Activated CD4-positive, alpha-beta T cell treated with anti-CD3 and anti-CD28 coated beads for 36 hours (primary cell): ENCODE measurements at regions of chr9 and their contacts with region 1.

Region 1: GRCh38 chr9:75185585-75186170 is 97.4 kb downstream of the OSTF1 start:
- DNase-seq: peak; percentile 79
- ATAC-seq: peak; percentile 72
- H3K4me3 Mint-ChIP-seq: no peak overlapping the region
- H3K27ac Mint-ChIP-seq: no peak overlapping the region
- H3K4me1 Mint-ChIP-seq: peaks cover 19% of the 10 kb centered on the region
- H3K27me3 Mint-ChIP-seq: no peaks in the 10 kb centered on the region

Region 2: DNA sequence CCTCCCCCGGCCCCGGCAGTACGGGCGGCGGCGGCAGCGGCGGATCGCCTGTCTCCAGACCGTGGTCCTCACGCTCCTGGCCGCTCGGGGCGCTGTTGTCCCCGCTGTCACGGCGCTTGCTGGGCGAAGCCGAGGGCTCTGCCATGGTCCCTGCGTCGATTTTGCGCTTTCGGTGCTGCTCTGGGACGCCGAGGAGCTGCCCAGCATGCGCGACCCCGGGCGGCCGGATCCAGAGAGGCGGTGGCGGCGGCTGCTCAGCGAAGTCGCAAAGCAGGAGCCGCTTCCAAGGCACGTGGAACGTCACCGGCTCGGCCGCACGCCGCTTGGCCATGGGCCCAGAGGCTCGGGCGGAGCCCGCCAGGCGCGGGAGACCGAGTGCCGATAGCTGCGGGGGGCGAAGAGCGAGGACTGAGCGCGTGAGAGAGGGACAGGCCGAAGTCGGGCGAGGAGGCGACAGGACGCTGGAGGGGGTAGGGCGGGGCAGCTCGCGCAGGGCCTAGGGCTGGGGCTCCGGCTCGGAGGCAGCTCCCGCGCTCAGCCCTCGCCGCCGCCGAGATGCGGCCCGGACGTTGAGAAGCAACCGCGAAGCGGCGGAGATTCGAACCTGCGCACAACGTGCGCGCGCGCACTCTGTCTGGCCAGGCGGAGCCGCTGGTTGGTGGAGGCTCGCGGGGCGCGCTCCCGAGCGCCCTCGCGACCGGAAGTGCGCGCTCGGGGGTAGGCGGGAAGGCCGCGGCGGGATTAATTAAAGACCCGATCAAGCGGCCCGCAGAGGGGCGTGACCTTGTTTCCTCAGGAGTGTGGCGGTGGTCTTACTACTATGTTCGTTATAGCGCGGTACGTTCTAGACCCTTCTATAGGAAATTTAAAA is 233.2 kb before region 1 on chr9 and contains the start of gene C9orf40:
- CTCF ChIA-PET with region 1: interaction called, 4 read pairs
- POLR2A ChIA-PET with region 1: no interaction called
- intact Hi-C with region 1: loop called in 1 of 2 experiments (anchors 5 kb)
- DNase-seq: peak; percentile 95
- ATAC-seq: peak; percentile 93
- H3K4me3 Mint-ChIP-seq: peak within 1 kb of the TSS; percentile 93
- H3K27ac Mint-ChIP-seq: peak within 1 kb of the TSS; percentile 96
- H3K4me1 Mint-ChIP-seq: peaks cover 28% of the 10 kb centered on the region
- H3K27me3 Mint-ChIP-seq: no peaks in the 10 kb centered on the region
- total RNA-seq, gene C9orf40: 14.0 to 19.7 TPM

Region 3: DNA sequence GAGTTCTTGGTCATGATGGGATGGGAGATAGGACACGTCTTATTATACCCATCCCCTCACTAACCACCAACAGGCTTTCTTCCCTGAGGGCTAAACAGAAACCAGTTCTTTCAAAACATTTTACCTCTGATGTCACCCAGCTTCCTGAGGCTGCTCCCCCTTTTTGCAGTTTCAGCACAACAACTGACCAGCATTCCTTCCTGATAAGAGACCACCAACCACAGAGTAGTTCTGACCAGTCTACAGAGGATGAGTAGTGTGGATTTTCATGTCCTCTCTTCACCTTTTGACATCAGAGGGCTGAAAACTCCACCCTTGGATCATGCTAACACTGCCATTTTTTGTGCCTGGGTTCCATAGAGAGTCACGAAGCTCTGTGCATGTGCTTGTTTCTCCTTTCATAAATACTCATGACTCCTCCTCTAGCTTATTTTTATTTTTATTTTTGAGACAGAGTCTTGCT is 14.7 kb before region 1 on chr9:
- CTCF ChIA-PET with region 1: interaction called, 21 read pairs
- POLR2A ChIA-PET with region 1: interaction called, 3 read pairs
- intact Hi-C with region 1: no loop called
- DNase-seq: no peak
- ATAC-seq: no peak
- H3K4me3 Mint-ChIP-seq: no peak overlapping the region
- H3K27ac Mint-ChIP-seq: no peak overlapping the region
- H3K4me1 Mint-ChIP-seq: peaks cover 10% of the 10 kb centered on the region
- H3K27me3 Mint-ChIP-seq: no peaks in the 10 kb centered on the region

Region 4: DNA sequence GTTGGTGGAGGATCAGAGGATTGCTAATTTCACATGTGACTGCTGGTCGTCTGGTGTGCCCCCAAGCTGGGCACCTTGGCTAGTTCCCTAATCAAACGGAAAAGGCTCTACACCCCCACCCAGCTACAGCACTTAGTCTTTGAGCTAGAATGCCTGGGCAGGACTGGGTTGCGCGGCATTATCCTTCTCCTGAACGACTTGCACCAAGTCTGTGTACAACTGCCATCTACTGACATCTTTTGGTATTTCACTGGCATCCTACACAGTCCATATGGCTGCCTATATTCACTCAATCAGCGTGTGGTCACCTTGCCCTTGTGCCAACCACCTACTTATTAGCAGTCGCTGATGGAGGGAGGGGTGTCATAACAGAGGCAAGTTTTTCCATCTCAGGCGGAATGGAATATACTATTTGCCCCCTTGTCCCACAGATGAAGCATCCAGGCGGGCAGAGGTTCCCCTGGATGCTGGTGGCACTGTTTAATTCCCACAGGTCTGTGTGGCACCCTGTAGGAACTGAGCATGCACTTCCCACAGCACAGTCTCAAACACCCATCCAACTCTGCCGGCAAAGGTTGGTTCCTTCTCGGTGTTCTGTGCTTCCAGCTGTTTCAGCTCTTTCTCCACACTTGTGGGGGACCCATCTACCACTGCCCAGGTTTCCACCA is 52.8 kb after region 1 on chr9:
- CTCF ChIA-PET with region 1: interaction called, 3 read pairs
- POLR2A ChIA-PET with region 1: no interaction called
- intact Hi-C with region 1: loop called in 1 of 2 experiments (anchors 5 kb)
- DNase-seq: peak; percentile 63
- ATAC-seq: peak; percentile 99
- H3K4me3 Mint-ChIP-seq: no peak overlapping the region
- H3K27ac Mint-ChIP-seq: no peak overlapping the region
- H3K4me1 Mint-ChIP-seq: no peaks in the 10 kb centered on the region
- H3K27me3 Mint-ChIP-seq: no peaks in the 10 kb centered on the region